ENCODE measurements at regions of chr1 and their contacts with region 1.

Region 1: DNA sequence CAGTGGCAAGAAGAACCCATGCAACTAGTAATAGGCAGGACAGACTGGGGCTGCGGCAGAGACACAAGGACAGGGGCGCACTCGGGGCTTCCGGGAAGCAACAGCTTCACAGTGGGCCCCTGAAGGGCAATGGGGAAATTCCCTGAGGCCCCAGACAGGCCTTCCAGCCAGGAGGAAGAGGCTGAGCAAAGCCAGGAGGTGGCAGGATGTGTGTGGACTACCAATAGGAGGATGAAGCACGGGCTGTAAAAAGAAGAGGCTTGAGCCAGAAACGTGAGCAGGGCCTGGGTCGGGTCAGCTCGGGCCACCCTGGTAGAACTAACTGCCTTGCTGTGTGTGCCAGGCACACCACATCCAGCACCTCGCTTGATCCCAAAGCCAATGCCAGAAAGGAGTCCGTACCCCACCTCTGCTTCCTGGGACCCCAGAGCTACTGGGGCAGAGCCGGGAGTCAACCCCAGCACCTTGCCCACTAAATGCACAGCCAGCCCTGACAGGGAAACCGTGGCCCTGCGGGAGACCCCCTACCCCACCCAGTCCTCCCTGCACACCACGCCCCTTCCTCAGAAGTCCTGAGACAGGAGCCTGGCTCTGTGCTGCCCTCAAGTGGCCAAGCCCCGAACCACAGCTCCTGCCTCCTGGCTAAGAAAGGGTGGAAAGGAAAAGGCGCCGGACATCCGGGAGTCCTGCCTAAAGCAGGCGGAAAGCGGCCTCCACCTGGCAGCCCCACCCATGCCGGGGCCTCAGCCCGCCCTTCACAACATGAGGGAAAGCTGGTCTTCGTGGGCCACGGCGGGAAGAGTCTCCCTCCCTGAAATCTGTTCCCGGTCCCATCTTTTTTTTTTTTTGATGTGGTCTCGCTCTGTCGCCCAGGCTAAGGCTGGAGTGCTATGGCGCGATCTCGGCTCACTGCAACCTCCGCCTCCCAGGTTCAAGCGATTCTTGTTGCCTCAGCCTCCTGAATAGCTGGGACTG is 33.7 kb downstream of the TTC39A start:
- DNase-seq: peak; percentile 80
- H3K4me3 ChIP-seq: peak overlapping the region in 2 of 3 experiments; percentile 2 to 34
- H3K27ac ChIP-seq: peak overlapping the region; percentile 39
- H3K4me1 ChIP-seq: peaks cover 9% of the 10 kb centered on the region
- H3K27me3 ChIP-seq: no peaks in the 10 kb centered on the region
- CTCF ChIP-seq: peak; percentile 93 to 96
- POLR2A ChIP-seq: peak; percentile 32

Region 2: DNA sequence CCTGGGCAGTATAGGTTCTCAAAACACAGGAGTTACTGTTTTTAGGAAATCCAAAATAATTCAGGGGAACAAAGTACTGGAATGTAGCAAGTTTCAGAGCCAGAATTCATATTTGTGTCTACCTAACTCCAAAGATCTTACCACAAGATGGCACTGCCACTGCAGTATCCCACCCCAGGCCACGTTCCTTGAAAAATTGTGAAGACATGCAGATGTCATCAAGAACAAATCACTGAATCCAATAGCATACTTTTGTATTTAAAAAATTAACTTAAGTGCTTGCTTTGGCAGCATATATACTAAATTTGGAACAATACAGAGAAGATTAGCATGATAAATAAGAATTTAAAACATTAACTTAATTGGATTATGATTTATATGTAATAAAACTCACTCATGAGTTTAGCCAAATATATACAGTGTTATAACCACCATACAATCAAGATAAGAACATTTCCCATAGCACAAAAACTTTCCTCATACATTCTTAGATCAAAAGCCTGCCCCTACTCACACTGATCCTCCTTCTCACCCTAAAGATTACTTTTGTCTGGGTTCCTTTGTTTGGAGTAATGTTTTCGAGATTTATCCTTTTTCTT is 546.5 kb before region 1 on chr1:
- CTCF ChIA-PET with region 1: no interaction called
- POLR2A ChIA-PET with region 1: no interaction called
- dilution Hi-C with region 1: no loop called
- intact Hi-C with region 1: loop called (anchors 1 kb)
- DNase-seq: peak; percentile 61
- H3K4me3 ChIP-seq: no peak overlapping the region
- H3K27ac ChIP-seq: no peak overlapping the region
- H3K4me1 ChIP-seq: no peaks in the 10 kb centered on the region
- H3K27me3 ChIP-seq: no peaks in the 10 kb centered on the region
- CTCF ChIP-seq: peak; percentile 32 to 50
- POLR2A ChIP-seq: no peak

Region 3: GRCh38 chr1:50893466-50893865 is 403.2 kb before region 1 on chr1:
- CTCF ChIA-PET with region 1: no interaction called
- POLR2A ChIA-PET with region 1: no interaction called
- dilution Hi-C with region 1: no loop called
- intact Hi-C with region 1: no loop called
- DNase-seq: no peak
- H3K4me3 ChIP-seq: no peak overlapping the region
- H3K27ac ChIP-seq: no peak overlapping the region
- H3K4me1 ChIP-seq: no peaks in the 10 kb centered on the region
- H3K27me3 ChIP-seq: no peaks in the 10 kb centered on the region
- CTCF ChIP-seq: no peak
- POLR2A ChIP-seq: no peak

Region 4: DNA sequence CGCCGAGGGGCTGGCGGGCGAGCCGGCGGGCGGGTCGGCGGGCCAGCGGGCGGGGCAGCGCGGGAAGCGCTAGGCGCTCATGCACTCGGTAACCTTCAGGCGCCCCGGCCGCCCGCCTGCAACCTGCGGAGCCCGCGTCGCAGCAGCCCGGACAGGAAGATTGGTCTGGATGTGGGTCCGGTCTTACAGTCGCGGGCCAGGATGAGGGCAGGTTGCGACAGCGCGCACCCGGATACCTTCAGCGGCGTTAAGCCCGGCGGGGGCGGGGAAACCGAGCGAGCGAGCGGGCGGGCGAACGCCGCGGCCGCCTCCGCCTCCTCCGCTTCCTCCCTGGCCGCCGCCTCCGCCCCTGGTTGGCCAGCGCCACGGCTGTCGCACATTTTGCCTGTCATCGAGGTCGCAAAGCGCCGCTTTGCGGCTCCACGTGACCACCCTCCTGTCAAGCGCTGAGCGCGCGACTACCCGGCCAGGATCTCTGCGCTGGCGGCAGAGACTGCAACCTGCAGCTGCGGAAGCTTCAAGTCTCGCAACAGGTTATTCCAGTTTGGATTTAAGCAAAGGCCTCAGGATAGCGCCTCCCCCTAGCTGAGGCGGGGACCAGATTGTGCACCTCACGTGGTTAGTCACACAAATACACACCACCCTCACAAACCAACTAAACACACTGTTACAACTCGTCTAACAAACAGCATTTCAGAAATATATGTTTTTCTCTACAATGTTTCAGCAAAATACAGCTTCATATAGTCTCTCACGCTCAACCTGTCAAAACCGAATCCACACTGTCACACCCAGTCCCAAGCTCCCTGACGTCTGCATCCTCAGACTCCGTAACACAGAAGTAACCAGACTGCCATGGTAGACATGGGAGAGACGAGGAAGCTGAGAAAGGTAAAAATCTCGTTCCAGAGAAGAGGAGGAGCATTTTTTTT is 336.5 kb before region 1 on chr1 and contains the start of gene FAF1:
- CTCF ChIA-PET with region 1: no interaction called
- POLR2A ChIA-PET with region 1: no interaction called
- dilution Hi-C with region 1: no loop called
- intact Hi-C with region 1: loop called (anchors 10 kb)
- DNase-seq: peak; percentile 98
- H3K4me3 ChIP-seq: peak within 1 kb of the TSS; percentile 73 to 97 (median 95)
- H3K27ac ChIP-seq: peak within 1 kb of the TSS; percentile 58
- H3K4me1 ChIP-seq: peaks cover 9% of the 10 kb centered on the region
- H3K27me3 ChIP-seq: no peaks in the 10 kb centered on the region
- CTCF ChIP-seq: peak in 1 of 2 donors; percentile 13
- POLR2A ChIP-seq: peak; percentile 93
- total RNA-seq, gene FAF1: 55.3 and 57.6 TPM in 2 replicates

Region 5: DNA sequence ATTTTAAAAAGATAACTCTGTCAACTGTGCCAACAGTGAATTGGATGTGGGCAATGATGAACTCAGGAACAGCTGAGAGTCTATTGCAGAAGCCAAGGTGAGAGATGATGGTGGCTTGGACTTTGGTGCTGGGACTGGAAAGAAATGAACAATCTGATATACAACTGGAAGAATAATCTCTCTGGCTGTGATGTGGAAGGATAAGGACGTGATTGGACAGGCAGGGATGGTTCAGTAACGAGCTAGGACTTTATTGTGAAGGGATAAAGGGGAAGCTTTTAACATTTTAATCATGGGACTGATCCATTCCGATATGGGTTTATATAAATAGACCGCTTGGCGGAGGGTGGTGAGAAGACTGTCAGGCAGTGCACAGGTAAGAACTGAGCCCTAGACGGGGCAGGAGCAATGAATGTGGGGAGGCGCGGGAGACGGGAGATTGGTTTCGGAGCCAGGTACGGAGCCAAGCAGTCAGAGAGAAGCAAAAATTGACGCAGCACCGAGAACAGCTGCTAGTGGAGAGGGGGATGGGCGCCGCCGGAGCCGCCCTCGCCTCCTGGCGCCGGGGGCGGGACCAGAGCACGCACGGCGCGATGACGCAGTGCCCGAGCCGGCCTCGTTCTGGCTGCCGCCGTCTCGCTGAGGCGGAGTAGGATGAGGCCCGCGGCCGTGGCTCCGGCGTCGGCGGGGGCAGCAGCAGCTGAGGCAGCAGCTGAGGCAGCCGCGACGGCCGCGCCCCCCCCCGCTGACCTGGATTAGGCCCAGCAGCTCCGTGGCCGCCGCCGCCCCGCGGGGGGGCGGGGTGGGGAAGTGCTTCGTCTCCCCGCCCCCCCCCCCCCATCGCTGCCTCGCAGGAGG is 60.8 kb before region 1 on chr1 and contains the start of gene RNF11:
- CTCF ChIA-PET with region 1: interaction called, 19 read pairs
- POLR2A ChIA-PET with region 1: no interaction called
- dilution Hi-C with region 1: no loop called
- intact Hi-C with region 1: loop called (anchors 1 kb)
- DNase-seq: peak; percentile 91
- H3K4me3 ChIP-seq: peak within 1 kb of the TSS; percentile 88 to 98 (median 91)
- H3K27ac ChIP-seq: peak within 1 kb of the TSS; percentile 97
- H3K4me1 ChIP-seq: peaks cover 23% of the 10 kb centered on the region
- H3K27me3 ChIP-seq: no peaks in the 10 kb centered on the region
- CTCF ChIP-seq: peak in 1 of 2 donors; percentile 0
- POLR2A ChIP-seq: peak; percentile 95
- total RNA-seq, gene RNF11: 82.9 and 94.4 TPM in 2 replicates

Region 6: GRCh38 chr1:51313961-51314777 is 17.5 kb after region 1 on chr1:
- CTCF ChIA-PET with region 1: interaction called, 15 read pairs
- POLR2A ChIA-PET with region 1: no interaction called
- dilution Hi-C with region 1: no loop called
- intact Hi-C with region 1: no loop called
- DNase-seq: peak; percentile 94
- H3K4me3 ChIP-seq: no peak overlapping the region
- H3K27ac ChIP-seq: peak overlapping the region; percentile 93
- H3K4me1 ChIP-seq: peaks cover 34% of the 10 kb centered on the region
- H3K27me3 ChIP-seq: no peaks in the 10 kb centered on the region
- CTCF ChIP-seq: no peak
- POLR2A ChIP-seq: peak; percentile 46